Activated naive CD4-positive, alpha-beta T cell treated with anti-CD3 and anti-CD28 coated beads for 36 hours (primary cell): ENCODE measurements at regions of chr3 and their contacts with region 1.

Region 1: GRCh38 chr3:15797642-15798303 is at the start of gene ANKRD28:
- DNase-seq: no peak
- H3K4me3 Mint-ChIP-seq: peak within 1 kb of the TSS; percentile 33
- H3K27ac Mint-ChIP-seq: peak within 1 kb of the TSS; percentile 48
- H3K4me1 Mint-ChIP-seq: peaks cover 70% of the 10 kb centered on the region
- H3K27me3 Mint-ChIP-seq: no peaks in the 10 kb centered on the region
- total RNA-seq, gene ANKRD28: 21.4 to 23.6 TPM

Region 2: DNA sequence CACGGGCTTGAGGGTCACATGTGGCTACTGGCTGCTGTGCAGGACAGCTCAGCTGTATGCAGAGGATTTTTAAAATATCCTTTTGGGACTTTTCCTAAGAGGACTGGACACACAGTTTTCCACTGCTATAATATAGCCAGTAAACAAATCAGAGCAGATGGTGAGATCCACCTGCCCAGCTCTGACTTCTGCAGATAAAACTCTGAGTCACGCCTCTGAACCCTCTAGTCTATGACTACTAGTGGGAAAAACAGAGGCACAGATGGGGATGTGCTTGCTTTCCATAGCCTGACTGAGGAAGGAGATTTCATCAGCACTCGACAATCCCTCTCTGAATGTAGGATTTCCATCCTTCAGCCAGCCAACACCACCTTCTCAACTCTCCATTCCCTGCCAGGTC is 321.4 kb before region 1 on chr3:
- CTCF ChIA-PET with region 1: no interaction called
- intact Hi-C with region 1: no loop called
- DNase-seq: no peak
- H3K4me3 Mint-ChIP-seq: no peak overlapping the region
- H3K27ac Mint-ChIP-seq: no peak overlapping the region
- H3K4me1 Mint-ChIP-seq: no peaks in the 10 kb centered on the region
- H3K27me3 Mint-ChIP-seq: no peaks in the 10 kb centered on the region

Region 3: DNA sequence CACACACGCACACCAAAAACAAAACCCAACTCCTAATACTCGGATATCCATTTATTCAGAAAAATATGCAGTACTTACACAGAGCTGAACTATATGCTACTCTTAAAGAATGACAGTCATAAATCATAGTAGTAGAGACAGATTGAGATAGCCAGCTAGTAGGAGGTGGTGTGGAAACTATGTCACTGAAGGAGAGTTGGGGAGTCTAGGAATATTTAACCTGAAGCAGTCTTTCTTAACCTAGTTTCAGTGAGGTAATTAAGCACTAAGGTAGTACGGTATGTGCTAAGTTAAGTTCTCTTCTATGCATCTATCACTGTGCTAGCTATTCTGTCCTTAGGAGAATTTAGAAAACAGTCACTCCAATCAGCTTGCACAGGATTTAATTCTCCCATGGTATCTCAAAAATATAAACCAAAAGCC is 54.2 kb before region 1 on chr3:
- CTCF ChIA-PET with region 1: no interaction called
- intact Hi-C with region 1: loop called (anchors 1 kb)
- DNase-seq: no peak
- H3K4me3 Mint-ChIP-seq: no peak overlapping the region
- H3K27ac Mint-ChIP-seq: no peak overlapping the region
- H3K4me1 Mint-ChIP-seq: peaks cover 37% of the 10 kb centered on the region
- H3K27me3 Mint-ChIP-seq: no peaks in the 10 kb centered on the region

Region 4: GRCh38 chr3:15768421-15769255 is 29.1 kb before region 1 on chr3:
- CTCF ChIA-PET with region 1: no interaction called
- intact Hi-C with region 1: loop called (anchors 1 kb)
- DNase-seq: peak; percentile 7
- H3K4me3 Mint-ChIP-seq: no peak overlapping the region
- H3K27ac Mint-ChIP-seq: peak overlapping the region; percentile 11
- H3K4me1 Mint-ChIP-seq: peaks cover 40% of the 10 kb centered on the region
- H3K27me3 Mint-ChIP-seq: no peaks in the 10 kb centered on the region

Region 5: GRCh38 chr3:15778332-15778858 is 19.4 kb before region 1 on chr3:
- CTCF ChIA-PET with region 1: no interaction called
- intact Hi-C with region 1: loop called (anchors 1 kb)
- DNase-seq: no peak
- H3K4me3 Mint-ChIP-seq: no peak overlapping the region
- H3K27ac Mint-ChIP-seq: no peak overlapping the region
- H3K4me1 Mint-ChIP-seq: peaks cover 30% of the 10 kb centered on the region
- H3K27me3 Mint-ChIP-seq: no peaks in the 10 kb centered on the region

Region 6: GRCh38 chr3:16012086-16012485 is 214.3 kb after region 1 on chr3:
- CTCF ChIA-PET with region 1: no interaction called
- intact Hi-C with region 1: no loop called
- DNase-seq: no peak
- H3K4me3 Mint-ChIP-seq: no peak overlapping the region
- H3K27ac Mint-ChIP-seq: no peak overlapping the region
- H3K4me1 Mint-ChIP-seq: no peaks in the 10 kb centered on the region
- H3K27me3 Mint-ChIP-seq: peaks cover 3% of the 10 kb centered on the region